ENCODE measurements at regions of chr17 and their contacts with region 1.

Region 1: DNA sequence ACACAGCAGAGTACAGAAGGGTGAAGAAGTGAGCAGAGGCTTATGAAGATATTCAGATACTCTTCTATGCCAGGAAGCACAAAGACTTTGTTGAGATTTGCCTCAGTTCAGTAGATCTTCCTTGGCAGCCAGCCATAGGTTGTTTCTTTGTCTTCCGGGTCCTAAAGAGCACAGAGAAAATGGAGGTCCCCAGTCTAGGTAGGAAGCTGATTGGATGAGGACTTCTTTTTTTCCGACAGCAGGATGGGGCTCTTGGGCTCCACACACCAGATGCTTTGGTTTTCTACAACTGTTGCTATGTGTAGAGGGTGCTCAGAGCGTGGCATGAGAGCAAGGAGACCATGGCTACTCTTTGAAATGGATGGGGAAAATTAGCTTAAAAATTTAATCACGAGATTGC is 8.3 kb upstream of the CDC6 start:
- DNase-seq: no peak
- ATAC-seq: no peak
- H3K4me3 ChIP-seq: no peak overlapping the region
- H3K27ac ChIP-seq: no peak overlapping the region
- H3K4me1 ChIP-seq: peaks cover 0 to 22% (median 5%) of the 10 kb centered on the region in 12 donors
- H3K27me3 ChIP-seq: no peaks in the 10 kb centered on the region
- CTCF ChIP-seq: no peak
- POLR2A ChIP-seq: no peak

Region 2: DNA sequence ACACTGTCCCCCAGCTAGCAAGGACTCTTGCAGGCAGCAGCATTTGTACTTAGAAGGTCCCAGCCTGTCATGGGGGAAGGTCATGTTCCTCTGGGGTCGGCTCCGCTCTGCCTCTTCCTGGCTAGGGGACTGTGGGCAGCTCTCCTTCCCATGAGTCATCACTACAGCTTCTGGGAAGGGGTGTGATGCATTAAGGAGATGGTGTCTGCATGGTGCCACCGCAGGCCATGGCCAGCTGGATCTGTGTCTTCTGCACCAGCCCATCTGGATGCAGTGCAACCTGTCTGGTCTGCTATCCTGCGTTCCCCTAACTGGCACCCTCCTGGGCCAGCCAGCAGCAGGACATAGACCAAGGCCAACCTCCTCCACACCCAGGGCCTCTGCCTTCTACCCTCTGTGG is 636.1 kb before region 1 on chr17:
- intact Hi-C with region 1: no loop called
- DNase-seq: no peak
- ATAC-seq: peak in 3 of 4 donors; percentile 12 to 22 (median 16)
- H3K4me3 ChIP-seq: no peak overlapping the region
- H3K27ac ChIP-seq: no peak overlapping the region
- H3K4me1 ChIP-seq: peaks cover 3 to 67% (median 40%) of the 10 kb centered on the region in 12 donors
- H3K27me3 ChIP-seq: no peaks in the 10 kb centered on the region
- CTCF ChIP-seq: no peak
- POLR2A ChIP-seq: no peak

Region 3: DNA sequence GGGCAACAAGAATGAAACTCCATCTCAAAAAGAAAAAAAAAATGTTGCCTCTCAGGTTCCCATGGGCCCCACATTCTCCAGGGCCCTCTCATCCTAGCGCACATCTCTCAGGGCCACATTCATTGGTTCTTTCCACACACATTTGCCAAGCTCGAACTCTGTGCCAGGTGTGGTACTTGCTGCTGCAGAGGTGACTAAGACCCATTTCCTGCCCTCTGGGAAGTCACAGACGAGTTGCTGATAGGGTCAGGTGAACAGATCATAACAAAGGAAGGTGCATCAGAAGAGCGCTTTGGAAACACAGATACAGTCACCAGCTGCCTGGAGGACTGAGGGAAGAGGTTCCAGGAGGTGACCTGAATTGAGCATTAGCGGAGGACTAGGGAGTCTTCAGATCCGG is 315.6 kb before region 1 on chr17:
- intact Hi-C with region 1: no loop called
- DNase-seq: no peak
- ATAC-seq: no peak
- H3K4me3 ChIP-seq: no peak overlapping the region
- H3K27ac ChIP-seq: no peak overlapping the region
- H3K4me1 ChIP-seq: peaks cover 0 to 27% (median 1%) of the 10 kb centered on the region in 12 donors
- H3K27me3 ChIP-seq: peaks cover 0 to 10% (median 0%) of the 10 kb centered on the region in 9 donors
- CTCF ChIP-seq: no peak
- POLR2A ChIP-seq: no peak

Region 4: DNA sequence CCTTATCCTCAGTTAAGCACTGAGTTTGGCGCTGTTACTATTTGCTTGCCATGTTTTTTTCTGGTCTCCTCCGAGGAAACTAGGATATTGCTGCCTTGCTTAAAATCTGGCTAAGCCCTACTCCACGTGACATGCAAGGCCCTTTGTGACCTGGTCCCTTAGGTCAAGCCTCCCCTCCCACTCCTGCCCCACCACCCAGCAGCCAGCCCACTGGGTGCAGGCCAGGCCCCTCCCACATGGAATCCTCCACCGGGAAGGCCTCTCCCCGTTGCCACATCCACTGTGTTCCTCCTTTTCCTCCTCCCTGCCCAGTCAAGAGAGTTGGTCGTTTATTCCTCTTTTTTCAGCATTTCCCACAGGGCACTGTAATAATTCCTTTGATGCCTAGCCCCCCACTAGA is 282.6 kb before region 1 on chr17:
- intact Hi-C with region 1: loop called in 1 of 10 experiments (anchors 10 kb)
- DNase-seq: peak in 1 of 5 donors; percentile 54
- ATAC-seq: peak in 3 of 4 donors; percentile 40 to 73 (median 58)
- H3K4me3 ChIP-seq: no peak overlapping the region
- H3K27ac ChIP-seq: peak overlapping the region in 1 of 12 donors; percentile 17
- H3K4me1 ChIP-seq: peaks cover 0 to 11% (median 0%) of the 10 kb centered on the region in 12 donors
- H3K27me3 ChIP-seq: no peaks in the 10 kb centered on the region
- CTCF ChIP-seq: no peak
- POLR2A ChIP-seq: no peak

Region 5: DNA sequence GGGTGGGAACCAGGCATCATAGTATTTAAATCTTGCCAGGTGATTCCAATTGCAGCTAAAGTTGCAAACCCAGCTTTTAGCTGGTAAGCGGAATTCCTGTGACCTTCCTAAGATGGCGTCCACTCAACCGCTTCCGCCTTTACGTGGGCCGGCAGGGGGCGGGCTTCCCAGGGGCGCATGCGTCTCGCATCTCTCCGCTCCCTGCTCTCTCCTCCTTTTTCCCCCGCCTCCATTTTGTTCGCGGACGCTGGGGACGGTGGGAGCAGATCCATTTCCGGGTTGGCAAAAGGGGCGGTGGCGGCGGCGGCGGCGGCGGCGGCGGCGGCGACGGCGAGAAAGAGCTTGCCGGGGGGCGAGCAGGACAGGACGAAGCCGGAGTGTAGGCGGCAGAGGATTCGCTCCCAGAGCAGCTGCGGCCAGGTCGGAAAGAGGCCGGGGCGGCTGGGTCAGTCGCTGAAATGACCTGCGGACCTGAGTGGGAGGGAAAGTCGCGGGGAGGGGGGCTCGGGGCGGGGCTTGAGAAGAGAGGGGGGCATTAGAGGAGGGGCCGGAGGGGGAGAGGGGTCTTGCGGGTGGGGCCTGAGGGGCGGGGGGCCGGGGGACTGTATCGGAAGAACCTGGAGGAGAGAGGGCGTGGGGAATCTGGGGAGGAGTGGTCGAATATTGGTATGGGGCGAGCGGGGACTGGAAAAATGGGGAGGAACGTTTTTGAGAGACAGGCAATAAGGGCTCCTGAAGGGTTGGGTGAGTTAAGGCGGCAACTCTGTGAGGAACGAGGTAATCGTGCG is 60.1 kb before region 1 on chr17 and contains the start of gene WIPF2:
- intact Hi-C with region 1: loop called in 1 of 10 experiments (anchors 10 kb)
- DNase-seq: peak; percentile 97 to 98 (median 97)
- ATAC-seq: peak; percentile 98 to 99 (median 99)
- H3K4me3 ChIP-seq: peak within 1 kb of the TSS; percentile 53 to 91 (median 71)
- H3K27ac ChIP-seq: peak within 1 kb of the TSS; percentile 69 to 96 (median 91)
- H3K4me1 ChIP-seq: peaks cover 0 to 28% (median 12%) of the 10 kb centered on the region in 12 donors
- H3K27me3 ChIP-seq: no peaks in the 10 kb centered on the region
- CTCF ChIP-seq: peak; percentile 56 to 93 (median 82)
- POLR2A ChIP-seq: peak in 1 of 2 donors; percentile 79
- total RNA-seq, gene WIPF2: 8.4 to 17.6 (median 11.2) TPM

Measured in heart left ventricle (tissue), 16 donors.